GM12878 (cell line): ENCODE measurements at regions of chr6 and their contacts with region 1.

Region 1: GRCh38 chr6:36765594-36766398 is 68.2 kb downstream of the RAB44 start:
- DNase-seq: no peak
- ATAC-seq: peak; percentile 98
- H3K4me3 ChIP-seq: no peak overlapping the region
- H3K27ac ChIP-seq: no peak overlapping the region
- H3K4me1 ChIP-seq: peaks cover 17% of the 10 kb centered on the region
- H3K27me3 ChIP-seq: no peaks in the 10 kb centered on the region
- CTCF ChIP-seq: peak; percentile 97 to 98 (median 98); a peak in 5 of 6 replicates
- EP300 ChIP-seq: no peak
- POLR2A ChIP-seq: no peak
- RAD21 ChIP-seq: peak; percentile 98

Region 2: GRCh38 chr6:36780442-36781177 is 14.8 kb after region 1 on chr6:
- CTCF ChIA-PET with region 1: interaction called, 330 read pairs
- POLR2A ChIA-PET with region 1: interaction called, 6 read pairs
- RAD21 ChIA-PET with region 1: interaction called, 102 read pairs
- SMC1A ChIA-PET with region 1: interaction called, 120 read pairs
- in situ Hi-C with region 1: no loop called
- intact Hi-C with region 1: loop called (anchors 2 kb)
- DNase-seq: no peak
- ATAC-seq: no peak
- H3K4me3 ChIP-seq: no peak overlapping the region
- H3K27ac ChIP-seq: no peak overlapping the region
- H3K4me1 ChIP-seq: peaks cover 21% of the 10 kb centered on the region
- H3K27me3 ChIP-seq: peaks cover 0 to 6% of the 10 kb centered on the region in 2 experiments; a peak in 1 of 4 replicates
- CTCF ChIP-seq: no peak
- EP300 ChIP-seq: no peak
- POLR2A ChIP-seq: no peak
- RAD21 ChIP-seq: no peak

Region 3: GRCh38 chr6:36809941-36810803 is 44.4 kb after region 1 on chr6:
- CTCF ChIA-PET with region 1: interaction called, 3 read pairs
- POLR2A ChIA-PET with region 1: no interaction called
- RAD21 ChIA-PET with region 1: no interaction called
- SMC1A ChIA-PET with region 1: interaction called, 10 read pairs
- in situ Hi-C with region 1: no loop called
- intact Hi-C with region 1: no loop called
- DNase-seq: no peak
- ATAC-seq: no peak
- H3K4me3 ChIP-seq: no peak overlapping the region
- H3K27ac ChIP-seq: no peak overlapping the region
- H3K4me1 ChIP-seq: no peaks in the 10 kb centered on the region
- H3K27me3 ChIP-seq: no peaks in the 10 kb centered on the region; a peak in 1 of 4 replicates
- CTCF ChIP-seq: no peak
- EP300 ChIP-seq: no peak
- POLR2A ChIP-seq: no peak
- RAD21 ChIP-seq: no peak

Region 4: GRCh38 chr6:36874443-36875249 is 108.8 kb after region 1 on chr6 and contains the start of gene PPIL1:
- CTCF ChIA-PET with region 1: interaction called, 13 read pairs
- POLR2A ChIA-PET with region 1: interaction called, 3 read pairs
- RAD21 ChIA-PET with region 1: interaction called, 9 read pairs
- SMC1A ChIA-PET with region 1: interaction called, 7 read pairs
- in situ Hi-C with region 1: no loop called
- intact Hi-C with region 1: no loop called
- DNase-seq: peak; percentile 78
- ATAC-seq: peak; percentile 93
- H3K4me3 ChIP-seq: peak within 1 kb of the TSS; percentile 79
- H3K27ac ChIP-seq: peak within 1 kb of the TSS; percentile 78
- H3K4me1 ChIP-seq: peaks cover 6% of the 10 kb centered on the region; the same call in 1 of the 2 replicates
- H3K27me3 ChIP-seq: no peaks in the 10 kb centered on the region
- CTCF ChIP-seq: no peak
- EP300 ChIP-seq: no peak
- POLR2A ChIP-seq: peak; percentile 81
- RAD21 ChIP-seq: no peak
- polyA plus RNA-seq, gene PPIL1: 74.4 to 95.8 TPM

Region 5: DNA sequence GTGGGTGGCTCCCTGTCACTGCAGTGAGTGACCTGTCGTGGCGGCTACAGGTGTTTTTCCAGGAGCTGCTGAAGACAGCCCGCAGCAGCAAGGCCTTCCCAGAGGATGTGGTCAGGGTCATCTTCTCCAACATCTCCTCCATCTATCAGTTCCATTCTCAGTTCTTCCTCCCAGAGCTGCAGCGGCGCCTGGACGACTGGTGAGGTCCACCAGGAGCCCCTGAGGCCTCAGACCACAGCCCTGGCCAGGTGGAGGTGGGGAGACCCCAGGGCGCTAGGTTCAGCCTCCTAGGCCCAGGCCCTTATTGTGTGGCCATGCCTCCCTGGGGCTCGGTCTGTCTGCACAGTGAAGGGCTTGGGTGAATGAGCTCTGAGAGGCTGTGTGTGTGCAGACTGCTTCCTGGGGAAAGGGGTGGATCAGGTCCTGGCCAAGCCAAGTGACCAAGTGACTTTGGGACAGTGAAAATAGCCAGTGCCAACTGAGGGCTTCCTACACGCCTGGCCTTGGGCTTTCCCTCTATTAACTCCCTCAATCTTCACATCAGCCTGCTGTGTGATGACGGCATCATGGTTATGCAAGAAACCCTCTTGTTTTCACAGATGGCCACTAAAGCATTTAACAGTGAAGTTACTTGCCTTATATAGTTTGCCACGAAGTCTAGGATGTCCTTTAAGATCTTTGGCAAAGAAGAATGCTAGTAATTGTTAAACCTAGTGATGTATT is 246.0 kb after region 1 on chr6:
- CTCF ChIA-PET with region 1: interaction called, 72 read pairs
- POLR2A ChIA-PET with region 1: no interaction called
- RAD21 ChIA-PET with region 1: interaction called, 4 read pairs
- SMC1A ChIA-PET with region 1: interaction called, 4 read pairs
- in situ Hi-C with region 1: loop called (anchors 5 kb)
- intact Hi-C with region 1: no loop called
- DNase-seq: no peak
- ATAC-seq: no peak
- H3K4me3 ChIP-seq: no peak overlapping the region
- H3K27ac ChIP-seq: no peak overlapping the region
- H3K4me1 ChIP-seq: peaks cover 18% of the 10 kb centered on the region
- H3K27me3 ChIP-seq: no peaks in the 10 kb centered on the region
- CTCF ChIP-seq: no peak
- EP300 ChIP-seq: no peak
- POLR2A ChIP-seq: no peak
- RAD21 ChIP-seq: no peak